Activated CD4-positive, alpha-beta memory T cell treated with anti-CD3 and anti-CD28 coated beads, Interleukin-2, amount 10 ng/mL, durations not matched to agents 7 days and 5 days (primary cell): ENCODE measurements at regions of chr4 and their contacts with region 1.

Region 1: DNA sequence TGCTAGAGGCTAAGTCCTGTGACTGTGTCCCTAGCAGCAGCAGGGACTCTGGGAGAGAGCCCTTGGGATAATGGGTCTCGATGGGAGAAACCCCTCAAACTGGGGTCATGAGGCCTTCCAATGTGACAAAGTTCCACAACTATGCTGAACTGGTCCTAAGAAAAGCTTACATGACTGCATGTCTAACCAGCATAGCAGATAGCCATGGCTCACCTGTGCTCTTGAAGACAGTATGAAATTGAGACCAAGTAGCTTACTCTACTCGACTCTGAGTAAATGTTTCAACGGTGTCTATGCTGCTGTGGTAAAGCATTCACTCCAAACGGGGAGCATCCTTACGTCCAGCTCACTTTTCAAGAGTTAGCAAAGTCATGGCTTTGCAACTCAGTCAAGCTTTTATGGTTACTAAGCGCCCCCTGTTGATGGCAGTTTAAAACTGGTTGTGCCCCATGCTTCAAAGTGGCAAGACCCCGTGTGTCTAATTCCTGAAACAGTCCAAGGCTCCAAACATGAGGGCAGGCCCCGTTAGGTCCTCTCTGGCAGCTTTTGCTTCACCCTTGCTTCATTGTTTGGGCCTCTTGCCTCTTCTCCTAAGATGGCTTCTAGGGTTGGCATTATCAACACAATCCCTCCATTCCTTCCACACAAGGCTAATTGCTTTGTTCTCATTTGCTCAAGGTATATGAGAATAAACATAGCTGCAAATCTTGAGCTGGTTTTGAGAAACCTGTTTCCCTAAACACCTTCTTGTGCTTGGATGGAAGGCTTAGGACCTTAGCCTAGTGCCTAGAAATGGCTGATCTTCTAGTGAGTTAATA is 46.6 kb downstream of the CCNG2 start:
- DNase-seq: peak; percentile 61
- H3K4me3 Mint-ChIP-seq: no peak overlapping the region
- H3K27ac Mint-ChIP-seq: no peak overlapping the region
- H3K4me1 Mint-ChIP-seq: peaks cover 7% of the 10 kb centered on the region
- H3K27me3 Mint-ChIP-seq: peaks cover 4% of the 10 kb centered on the region

Region 2: DNA sequence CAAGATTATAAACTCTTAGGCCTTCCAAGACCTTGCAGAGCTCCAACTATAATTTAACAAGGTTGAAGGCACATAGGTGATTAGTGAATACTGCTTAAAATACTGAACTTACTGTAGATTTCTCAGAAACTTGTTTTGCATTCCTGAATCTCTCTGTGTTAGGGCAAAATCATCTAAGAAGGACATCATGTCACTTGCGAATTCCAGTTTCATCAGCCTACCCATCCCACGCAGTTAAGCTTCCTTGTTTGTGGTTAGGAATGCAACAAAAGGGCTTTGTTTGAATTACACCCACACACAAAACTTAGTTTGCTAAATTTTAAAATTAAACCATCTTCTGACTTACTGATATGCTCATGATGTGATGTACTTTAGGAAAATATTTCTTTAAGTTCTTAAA is 479.7 kb before region 1 on chr4:
- CTCF ChIA-PET with region 1: no interaction called
- POLR2A ChIA-PET with region 1: no interaction called
- DNase-seq: no peak
- H3K4me3 Mint-ChIP-seq: no peak overlapping the region
- H3K27ac Mint-ChIP-seq: no peak overlapping the region
- H3K4me1 Mint-ChIP-seq: no peaks in the 10 kb centered on the region
- H3K27me3 Mint-ChIP-seq: peaks cover 25% of the 10 kb centered on the region

Region 3: GRCh38 chr4:77031544-77031943 is 172.0 kb before region 1 on chr4:
- CTCF ChIA-PET with region 1: interaction called, 11 read pairs
- POLR2A ChIA-PET with region 1: no interaction called
- DNase-seq: peak; percentile 26
- H3K4me3 Mint-ChIP-seq: no peak overlapping the region
- H3K27ac Mint-ChIP-seq: peak overlapping the region; percentile 5
- H3K4me1 Mint-ChIP-seq: peaks cover 46% of the 10 kb centered on the region
- H3K27me3 Mint-ChIP-seq: peaks cover 3% of the 10 kb centered on the region

Region 4: DNA sequence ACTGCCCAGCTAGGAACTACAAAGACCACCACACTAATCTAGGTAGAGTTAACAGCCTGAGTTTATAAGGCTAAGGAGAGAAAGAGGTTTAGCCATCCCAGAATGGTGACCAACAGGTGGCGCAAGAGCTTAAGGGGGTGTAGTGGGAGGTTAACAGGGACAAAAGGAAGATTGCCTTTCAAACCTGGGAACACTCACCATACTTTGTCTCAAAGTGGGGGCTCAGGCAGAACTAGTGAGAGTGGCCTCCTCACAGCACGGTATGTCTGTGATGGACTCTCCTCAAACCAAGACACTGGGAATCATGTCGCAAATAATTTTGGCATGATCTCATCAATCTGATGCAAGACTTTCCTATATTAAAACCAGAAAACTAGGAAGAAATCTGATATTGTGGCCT is 151.2 kb before region 1 on chr4:
- CTCF ChIA-PET with region 1: interaction called, 114 read pairs
- POLR2A ChIA-PET with region 1: interaction called, 4 read pairs
- DNase-seq: peak; percentile 56
- H3K4me3 Mint-ChIP-seq: no peak overlapping the region
- H3K27ac Mint-ChIP-seq: no peak overlapping the region
- H3K4me1 Mint-ChIP-seq: no peaks in the 10 kb centered on the region
- H3K27me3 Mint-ChIP-seq: no peaks in the 10 kb centered on the region

Region 5: GRCh38 chr4:77075869-77076799 is 127.5 kb before region 1 on chr4 and contains the start of gene CCNI:
- CTCF ChIA-PET with region 1: interaction called, 16 read pairs
- POLR2A ChIA-PET with region 1: interaction called, 6 read pairs
- DNase-seq: peak; percentile 94
- H3K4me3 Mint-ChIP-seq: no peak within 1 kb of the TSS
- H3K27ac Mint-ChIP-seq: peak within 1 kb of the TSS; percentile 99
- H3K4me1 Mint-ChIP-seq: peaks cover 40% of the 10 kb centered on the region
- H3K27me3 Mint-ChIP-seq: peaks cover 3% of the 10 kb centered on the region
- total RNA-seq, gene CCNI: 244 to 246 TPM

Region 6: DNA sequence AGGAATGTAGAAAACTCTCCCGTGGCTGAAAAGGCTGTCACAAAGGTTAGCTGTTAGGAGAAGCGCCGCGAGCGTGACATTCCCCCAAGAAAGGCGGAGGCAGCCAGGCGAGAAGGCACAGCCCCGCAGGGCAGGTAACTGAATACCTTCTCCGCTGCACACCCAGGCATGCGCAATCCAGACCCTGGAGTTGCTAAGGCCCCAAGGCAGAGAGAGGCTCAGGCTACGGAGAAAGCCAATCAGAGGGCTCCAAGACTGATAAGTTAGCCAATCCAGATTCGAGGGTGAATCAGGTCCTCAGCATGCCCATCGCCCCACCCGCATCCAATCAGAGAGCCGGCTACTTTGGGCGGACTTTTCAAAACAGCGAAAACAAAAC is 47.1 kb before region 1 on chr4:
- CTCF ChIA-PET with region 1: interaction called, 12 read pairs
- POLR2A ChIA-PET with region 1: interaction called, 9 read pairs
- DNase-seq: peak; percentile 97
- H3K4me3 Mint-ChIP-seq: peak overlapping the region; percentile 98
- H3K27ac Mint-ChIP-seq: peak overlapping the region; percentile 90
- H3K4me1 Mint-ChIP-seq: peaks cover 43% of the 10 kb centered on the region
- H3K27me3 Mint-ChIP-seq: no peaks in the 10 kb centered on the region

Region 7: GRCh38 chr4:77564231-77564630 is 360.6 kb after region 1 on chr4:
- CTCF ChIA-PET with region 1: no interaction called
- POLR2A ChIA-PET with region 1: no interaction called
- DNase-seq: no peak
- H3K4me3 Mint-ChIP-seq: no peak overlapping the region
- H3K27ac Mint-ChIP-seq: no peak overlapping the region
- H3K4me1 Mint-ChIP-seq: no peaks in the 10 kb centered on the region
- H3K27me3 Mint-ChIP-seq: peaks cover 14% of the 10 kb centered on the region